MCF 10A (cell line): ENCODE measurements at regions of chr19 and their contacts with region 1.

Region 1: GRCh38 chr19:48999481-49000325 is 6.0 kb downstream of the RUVBL2 start:
- DNase-seq: peak; percentile 69
- H3K4me3 Mint-ChIP-seq: no peak overlapping the region
- H3K27ac Mint-ChIP-seq: no peak overlapping the region
- H3K4me1 Mint-ChIP-seq: peaks cover 9% of the 10 kb centered on the region
- H3K27me3 Mint-ChIP-seq: no peaks in the 10 kb centered on the region
- CTCF ChIP-seq: peak; percentile 81

Region 2: DNA sequence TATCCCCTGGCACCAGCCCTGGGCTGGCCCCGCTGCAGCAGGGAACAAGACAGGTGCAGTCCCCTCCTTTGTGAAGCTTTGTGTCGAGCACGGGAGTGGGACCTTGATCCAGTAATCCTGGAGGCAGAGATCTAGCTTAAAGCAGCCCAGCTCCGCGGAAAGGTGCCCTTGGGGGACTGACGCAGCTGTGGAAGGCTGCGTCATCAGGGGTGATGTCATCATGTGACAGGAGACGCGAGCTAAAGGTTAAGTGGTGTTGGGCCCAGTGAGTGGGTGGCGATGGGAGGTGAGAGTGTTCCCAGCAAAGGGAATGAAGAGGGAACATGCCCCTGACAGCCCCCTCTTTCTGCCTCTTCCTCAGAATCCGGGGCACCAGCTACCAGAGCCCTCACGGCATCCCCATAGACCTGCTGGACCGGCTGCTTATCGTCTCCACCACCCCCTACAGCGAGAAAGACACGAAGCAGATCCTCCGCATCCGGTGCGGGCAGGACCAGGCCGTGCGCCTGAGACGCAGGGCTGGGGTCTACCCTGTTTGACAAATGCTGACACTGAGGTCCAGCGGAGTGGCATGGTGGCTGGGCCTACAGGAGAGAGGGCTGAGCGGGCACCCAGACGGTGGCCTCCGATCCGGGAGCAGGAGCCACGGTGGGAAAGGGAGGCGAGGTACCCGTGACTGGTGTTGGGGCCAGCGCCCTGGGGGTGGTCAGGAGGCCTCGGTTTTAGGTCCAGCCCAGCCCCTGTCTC is 14.6 kb after region 1 on chr19:
- CTCF ChIA-PET with region 1: interaction called, 17 read pairs
- POLR2A ChIA-PET with region 1: interaction called, 3 read pairs
- intact Hi-C with region 1: no loop called
- DNase-seq: no peak
- H3K4me3 Mint-ChIP-seq: no peak overlapping the region
- H3K27ac Mint-ChIP-seq: no peak overlapping the region
- H3K4me1 Mint-ChIP-seq: peaks cover 5% of the 10 kb centered on the region
- H3K27me3 Mint-ChIP-seq: no peaks in the 10 kb centered on the region
- CTCF ChIP-seq: no peak

Region 3: DNA sequence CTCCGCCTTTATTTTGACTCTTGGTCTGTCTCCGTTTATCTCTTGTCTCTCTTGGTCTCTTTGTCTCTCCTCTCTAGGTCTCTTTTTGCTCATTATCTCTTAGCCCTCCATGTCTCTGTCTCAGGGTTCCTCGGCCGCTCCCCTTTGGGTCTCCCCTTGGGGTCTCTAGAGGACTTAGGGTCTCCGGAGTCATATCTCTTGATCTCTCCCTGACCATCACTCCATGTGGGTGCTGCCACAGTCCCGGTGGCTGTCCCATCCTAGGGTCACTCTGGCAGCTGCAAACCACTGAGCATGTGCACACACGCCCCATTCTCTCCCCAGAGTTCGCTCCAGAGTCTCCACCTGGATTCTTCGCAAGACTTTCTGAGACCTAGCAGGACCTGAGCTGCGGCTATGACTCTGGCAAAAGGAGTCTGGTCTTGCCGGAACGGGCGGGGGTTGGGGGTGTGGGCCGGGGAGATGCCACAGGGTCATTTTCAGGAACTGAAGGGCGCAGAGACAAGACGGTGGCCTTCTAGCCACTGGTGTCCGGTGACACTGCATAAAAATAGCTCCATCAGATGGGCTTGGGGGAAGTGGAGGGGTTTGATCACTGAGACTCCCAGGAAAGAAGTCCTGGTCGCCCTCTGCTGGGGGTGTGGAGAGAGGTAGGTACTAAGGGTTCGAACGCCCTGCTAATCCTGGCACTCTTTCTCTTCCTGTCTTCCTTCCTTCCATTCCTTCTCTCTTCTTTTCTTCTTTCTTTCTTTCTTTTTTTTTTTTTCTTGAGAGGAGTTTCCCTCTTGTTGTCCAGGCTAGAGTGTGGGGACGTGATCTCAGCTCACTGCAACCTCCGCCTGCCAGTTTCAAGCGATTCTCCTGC is 74.0 kb after region 1 on chr19:
- CTCF ChIA-PET with region 1: interaction called, 11 read pairs
- POLR2A ChIA-PET with region 1: no interaction called
- intact Hi-C with region 1: loop called (anchors 2 kb)
- DNase-seq: peak; percentile 56
- H3K4me3 Mint-ChIP-seq: no peak overlapping the region
- H3K27ac Mint-ChIP-seq: no peak overlapping the region
- H3K4me1 Mint-ChIP-seq: peaks cover 19% of the 10 kb centered on the region
- H3K27me3 Mint-ChIP-seq: peaks cover 20% of the 10 kb centered on the region
- CTCF ChIP-seq: peak; percentile 47

Region 4: DNA sequence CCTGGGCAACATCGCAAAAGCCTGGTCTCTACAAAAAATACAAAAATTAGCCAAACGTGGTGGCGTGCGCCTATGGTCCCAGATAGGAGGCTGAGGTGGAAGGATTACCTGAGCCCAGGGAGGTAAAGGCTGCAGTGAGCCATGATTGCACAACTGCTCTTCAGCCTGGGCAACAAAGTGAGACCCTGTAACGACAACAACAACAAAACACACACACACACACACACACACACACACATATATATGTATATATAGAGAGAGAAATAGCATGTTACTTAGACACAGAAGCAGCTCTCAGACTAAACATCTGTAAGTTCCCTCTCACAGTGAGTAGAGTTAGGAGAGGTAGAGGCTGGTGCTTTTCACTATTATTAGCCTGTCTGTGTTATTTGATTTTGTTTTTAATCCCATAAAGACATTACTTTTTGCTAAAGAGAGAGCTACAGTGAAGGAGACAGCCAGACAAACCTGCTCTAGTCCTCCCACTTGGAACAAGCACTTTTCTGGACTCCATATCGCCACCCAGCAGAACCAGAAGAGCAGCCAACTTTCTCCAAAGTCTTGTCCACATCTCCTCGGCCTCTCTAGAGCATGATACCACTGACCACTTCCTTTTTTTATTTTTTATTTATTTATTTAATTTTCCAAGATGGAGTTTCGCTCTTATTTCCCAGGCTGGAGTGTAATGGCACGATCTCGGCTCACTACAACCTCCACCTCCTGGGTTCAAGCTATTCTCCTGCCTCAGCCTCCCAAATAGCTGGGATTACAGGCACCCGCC is 111.7 kb after region 1 on chr19:
- CTCF ChIA-PET with region 1: no interaction called
- POLR2A ChIA-PET with region 1: no interaction called
- intact Hi-C with region 1: no loop called
- DNase-seq: no peak
- H3K4me3 Mint-ChIP-seq: no peak overlapping the region
- H3K27ac Mint-ChIP-seq: no peak overlapping the region
- H3K4me1 Mint-ChIP-seq: peaks cover 17% of the 10 kb centered on the region
- H3K27me3 Mint-ChIP-seq: no peaks in the 10 kb centered on the region
- CTCF ChIP-seq: no peak